Activated naive CD4-positive, alpha-beta T cell treated with anti-CD3 and anti-CD28 coated beads for 36 hours (primary cell): ENCODE measurements at regions of chr6 and their contacts with region 1.

Region 1: GRCh38 chr6:3209114-3210023 is 18.1 kb downstream of the TUBB2B start:
- DNase-seq: peak; percentile 81
- H3K4me3 Mint-ChIP-seq: peak overlapping the region; percentile 13
- H3K27ac Mint-ChIP-seq: peak overlapping the region; percentile 88
- H3K4me1 Mint-ChIP-seq: peaks cover 23% of the 10 kb centered on the region
- H3K27me3 Mint-ChIP-seq: peaks cover 39% of the 10 kb centered on the region

Region 2: GRCh38 chr6:2765166-2765895 is 444.0 kb before region 1 on chr6 and contains the start of gene WRNIP1:
- CTCF ChIA-PET with region 1: no interaction called
- intact Hi-C with region 1: loop called (anchors 5 kb)
- DNase-seq: peak; percentile 97
- H3K4me3 Mint-ChIP-seq: peak within 1 kb of the TSS; percentile 93
- H3K27ac Mint-ChIP-seq: peak within 1 kb of the TSS; percentile 96
- H3K4me1 Mint-ChIP-seq: peaks cover 45% of the 10 kb centered on the region
- H3K27me3 Mint-ChIP-seq: no peaks in the 10 kb centered on the region
- total RNA-seq, gene WRNIP1: 19.2 to 21.7 TPM

Region 3: GRCh38 chr6:2999618-3000557 is 209.5 kb before region 1 on chr6 and contains the start of gene NQO2:
- CTCF ChIA-PET with region 1: interaction called, 4 read pairs
- intact Hi-C with region 1: loop called (anchors 1 kb)
- DNase-seq: peak; percentile 91
- H3K4me3 Mint-ChIP-seq: peak within 1 kb of the TSS; percentile 82
- H3K27ac Mint-ChIP-seq: peak within 1 kb of the TSS; percentile 82
- H3K4me1 Mint-ChIP-seq: peaks cover 16% of the 10 kb centered on the region
- H3K27me3 Mint-ChIP-seq: no peaks in the 10 kb centered on the region
- total RNA-seq, gene NQO2: 18.8 to 21.1 TPM

Region 4: DNA sequence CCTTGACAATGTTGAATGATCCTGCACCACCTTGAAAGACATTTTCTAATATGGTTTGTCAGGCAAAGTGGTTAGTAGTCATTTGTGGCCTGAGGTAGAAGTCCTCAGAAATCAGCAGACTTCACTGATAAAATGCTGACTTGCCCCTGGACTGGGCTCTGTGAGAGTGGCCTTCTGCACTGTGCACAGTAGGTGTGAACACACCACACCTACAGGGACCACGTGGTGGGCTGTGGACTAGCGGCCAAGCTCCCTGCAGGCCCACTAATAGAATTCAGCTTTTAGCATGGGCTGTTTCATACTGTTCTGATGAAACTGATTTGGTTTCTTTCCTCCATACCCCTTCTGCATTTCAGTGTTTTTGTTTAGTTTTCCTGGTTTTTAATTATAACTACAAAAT is 83.6 kb before region 1 on chr6:
- CTCF ChIA-PET with region 1: interaction called, 5 read pairs
- intact Hi-C with region 1: loop called (anchors 1 kb)
- DNase-seq: no peak
- H3K4me3 Mint-ChIP-seq: no peak overlapping the region
- H3K27ac Mint-ChIP-seq: no peak overlapping the region
- H3K4me1 Mint-ChIP-seq: peaks cover 7% of the 10 kb centered on the region
- H3K27me3 Mint-ChIP-seq: no peaks in the 10 kb centered on the region

Region 5: GRCh38 chr6:3194535-3195419 is 14.6 kb before region 1 on chr6:
- CTCF ChIA-PET with region 1: interaction called, 4 read pairs
- intact Hi-C with region 1: loop called (anchors 2 kb)
- DNase-seq: peak; percentile 62
- H3K4me3 Mint-ChIP-seq: no peak overlapping the region
- H3K27ac Mint-ChIP-seq: no peak overlapping the region
- H3K4me1 Mint-ChIP-seq: no peaks in the 10 kb centered on the region
- H3K27me3 Mint-ChIP-seq: peaks cover 2% of the 10 kb centered on the region

Region 6: DNA sequence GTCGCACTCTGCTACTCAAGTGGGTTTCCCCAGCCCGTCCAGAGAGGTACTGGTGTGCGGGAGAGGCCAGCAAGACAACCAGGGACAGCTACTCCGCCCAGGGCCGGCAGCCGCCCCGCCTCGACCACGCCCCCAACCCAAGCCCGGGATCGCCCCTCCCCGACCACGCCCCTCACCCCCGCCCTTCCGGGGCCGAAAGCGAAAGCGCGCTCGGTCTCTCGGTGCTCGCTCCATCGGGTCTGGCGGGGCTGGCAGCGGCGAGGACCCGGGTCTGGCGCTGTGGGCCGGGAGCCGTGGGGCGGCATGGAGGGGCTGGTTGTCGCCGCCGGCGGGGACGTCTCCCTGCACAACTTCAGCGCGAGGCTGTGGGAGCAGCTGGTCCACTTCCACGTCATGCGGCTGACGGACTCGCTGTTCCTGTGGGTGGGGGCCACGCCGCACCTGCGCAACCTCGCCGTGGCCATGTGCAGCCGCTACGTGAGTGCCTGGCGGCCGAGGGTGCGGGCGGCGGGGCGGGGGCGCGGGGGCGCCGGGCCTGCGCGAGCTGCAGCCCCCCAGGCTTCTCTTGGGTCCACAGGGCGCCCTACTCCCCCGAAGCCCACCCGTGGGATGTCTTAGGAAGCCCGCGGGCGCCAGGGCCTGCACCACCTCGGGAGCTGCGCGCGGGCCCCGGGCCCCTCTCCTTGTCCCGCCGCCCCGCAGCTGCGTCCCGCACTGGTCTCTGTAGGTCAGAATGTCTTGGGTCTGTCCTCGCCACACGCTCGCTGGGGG is 49.5 kb after region 1 on chr6 and contains the start of gene PSMG4:
- CTCF ChIA-PET with region 1: interaction called, 4 read pairs
- intact Hi-C with region 1: loop called (anchors 1 kb)
- DNase-seq: peak; percentile 94
- H3K4me3 Mint-ChIP-seq: peak within 1 kb of the TSS; percentile 94
- H3K27ac Mint-ChIP-seq: peak within 1 kb of the TSS; percentile 87
- H3K4me1 Mint-ChIP-seq: peaks cover 35% of the 10 kb centered on the region
- H3K27me3 Mint-ChIP-seq: no peaks in the 10 kb centered on the region
- total RNA-seq, gene PSMG4: 23.9 to 26.2 TPM